Caco-2 (cell line): ENCODE measurements at regions of chr6 and their contacts with region 1.

Region 1: DNA sequence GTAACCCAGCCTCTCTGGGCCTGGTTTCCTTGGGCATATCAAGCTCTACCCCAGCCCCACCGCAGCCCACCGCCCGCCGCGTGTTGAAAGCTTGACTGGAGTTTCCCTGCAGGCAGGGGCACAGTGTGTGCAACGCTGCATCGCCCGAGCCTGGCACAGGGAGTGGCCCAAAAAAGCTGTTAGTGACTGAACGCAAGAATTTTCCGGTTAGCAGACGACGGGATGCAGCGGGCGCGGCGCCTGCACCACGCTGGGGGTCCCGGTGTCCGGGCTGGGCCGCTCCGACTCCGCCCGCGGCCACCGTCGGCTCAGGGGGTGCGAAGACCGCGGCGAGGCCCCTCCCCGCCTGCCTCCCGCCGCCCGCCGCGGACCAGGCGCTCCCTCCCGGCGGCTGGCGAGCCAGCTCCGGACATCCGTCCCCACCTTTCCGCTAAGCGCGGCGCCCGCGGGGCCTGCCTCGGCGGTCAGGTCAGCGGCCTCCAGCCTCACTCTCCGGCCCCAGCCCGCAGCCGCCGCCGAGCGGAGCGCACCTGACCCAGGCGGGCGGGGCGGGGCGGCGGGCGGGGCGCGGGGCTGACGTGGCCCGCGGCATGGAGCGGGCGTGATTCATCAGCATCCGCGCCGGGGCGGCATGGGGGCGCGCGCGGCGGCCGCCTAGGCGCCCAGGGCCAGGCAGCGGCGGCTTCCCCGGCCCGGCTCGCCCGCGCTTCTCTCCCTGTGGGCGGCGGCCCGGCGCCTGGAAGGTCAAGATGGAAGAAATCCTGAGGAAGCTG is at the start of gene ARFGEF3:
- DNase-seq: peak; percentile 61 to 80
- H3K4me3 ChIP-seq: peak within 1 kb of the TSS; percentile 68
- H3K4me3 Mint-ChIP-seq: peak within 1 kb of the TSS; percentile 71
- H3K27ac Mint-ChIP-seq: no peak within 1 kb of the TSS
- H3K4me1 ChIP-seq: 0 out of 2 replicates have a peak, but pooled peaks cover 5% of the 10 kb centered on the region
- H3K4me1 Mint-ChIP-seq: peaks cover 7% of the 10 kb centered on the region
- H3K27me3 ChIP-seq: 0 out of 2 replicates have a peak, but pooled peaks cover 1% of the 10 kb centered on the region
- H3K27me3 Mint-ChIP-seq: peaks cover 15% of the 10 kb centered on the region
- CTCF ChIP-seq: no peak
- total RNA-seq, gene ARFGEF3: 5.2 and 5.6 TPM in 2 replicates

Region 2: DNA sequence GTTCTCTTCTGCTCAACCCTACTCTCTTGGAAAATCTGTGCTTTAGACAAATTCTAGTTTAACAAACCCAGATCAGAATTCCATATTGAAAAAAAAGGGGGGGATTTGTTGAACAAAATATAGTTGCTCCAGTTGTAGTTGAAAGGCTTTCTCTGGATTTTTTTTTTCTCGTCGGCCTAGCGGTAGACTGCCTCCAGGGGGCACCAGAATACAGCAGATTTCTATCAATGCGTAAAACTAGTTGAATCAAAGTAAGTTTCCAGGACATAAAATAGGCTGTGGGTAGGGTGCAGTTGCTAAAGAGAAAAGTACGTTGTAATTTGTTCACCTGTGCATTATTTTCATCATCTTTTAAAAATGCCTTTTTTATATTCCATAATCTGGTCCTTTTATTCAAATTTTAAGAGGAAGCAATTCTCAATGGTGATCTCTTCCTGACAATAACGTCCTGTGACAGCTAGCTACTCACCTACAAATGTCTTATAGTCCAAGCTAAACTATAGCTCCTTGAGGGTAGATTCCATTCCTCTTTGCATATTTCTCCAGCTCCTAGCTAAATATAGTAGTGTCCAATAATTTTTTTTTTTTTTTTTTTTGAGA is 159.7 kb before region 1 on chr6:
- CTCF ChIA-PET with region 1: no interaction called
- POLR2A ChIA-PET with region 1: no interaction called
- intact Hi-C with region 1: no loop called
- DNase-seq: peak; percentile 53 to 69
- H3K4me3 ChIP-seq: no peak overlapping the region
- H3K4me3 Mint-ChIP-seq: no peak overlapping the region
- H3K27ac Mint-ChIP-seq: no peak overlapping the region
- H3K4me1 ChIP-seq: peaks cover 2% of the 10 kb centered on the region; the same call in 1 of the 2 replicates
- H3K4me1 Mint-ChIP-seq: peaks cover 9% of the 10 kb centered on the region
- H3K27me3 ChIP-seq: no peaks in the 10 kb centered on the region
- H3K27me3 Mint-ChIP-seq: no peaks in the 10 kb centered on the region
- CTCF ChIP-seq: peak; percentile 87

Region 3: DNA sequence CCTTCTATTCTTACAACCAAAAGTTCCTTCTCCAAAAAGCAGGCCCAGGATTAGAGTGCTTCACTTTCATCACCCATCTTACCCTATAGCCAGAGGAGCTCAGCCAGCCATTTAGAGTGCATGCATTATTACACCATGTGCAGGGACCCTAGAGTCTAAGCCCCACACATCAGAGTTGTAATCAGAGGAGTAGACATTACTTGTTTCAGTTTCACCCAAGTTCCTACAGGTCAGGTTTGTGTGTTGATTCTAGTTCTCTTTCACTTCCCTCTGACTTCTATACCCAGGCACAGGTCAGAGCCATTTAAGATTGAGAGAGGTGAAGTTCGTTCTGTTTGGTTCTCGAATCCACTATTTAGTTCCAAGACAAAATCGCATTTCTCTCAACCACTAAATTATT is 16.1 kb before region 1 on chr6:
- CTCF ChIA-PET with region 1: no interaction called
- POLR2A ChIA-PET with region 1: no interaction called
- intact Hi-C with region 1: no loop called
- DNase-seq: no peak
- H3K4me3 ChIP-seq: no peak overlapping the region
- H3K4me3 Mint-ChIP-seq: no peak overlapping the region
- H3K27ac Mint-ChIP-seq: no peak overlapping the region
- H3K4me1 ChIP-seq: no peaks in the 10 kb centered on the region
- H3K4me1 Mint-ChIP-seq: no peaks in the 10 kb centered on the region
- H3K27me3 ChIP-seq: no peaks in the 10 kb centered on the region; the same call in 1 of the 2 replicates
- H3K27me3 Mint-ChIP-seq: peaks cover 9% of the 10 kb centered on the region
- CTCF ChIP-seq: no peak

Region 4: GRCh38 chr6:138231381-138231897 is 69.9 kb after region 1 on chr6:
- CTCF ChIA-PET with region 1: no interaction called
- POLR2A ChIA-PET with region 1: no interaction called
- intact Hi-C with region 1: loop called (anchors 2 kb)
- DNase-seq: peak; percentile 45 to 51
- H3K4me3 ChIP-seq: no peak overlapping the region
- H3K4me3 Mint-ChIP-seq: peak overlapping the region; percentile 25
- H3K27ac Mint-ChIP-seq: peak overlapping the region; percentile 47
- H3K4me1 ChIP-seq: peaks cover 27% of the 10 kb centered on the region
- H3K4me1 Mint-ChIP-seq: peaks cover 34% of the 10 kb centered on the region
- H3K27me3 ChIP-seq: no peaks in the 10 kb centered on the region
- H3K27me3 Mint-ChIP-seq: no peaks in the 10 kb centered on the region
- CTCF ChIP-seq: no peak

Region 5: GRCh38 chr6:138278326-138278725 is 116.8 kb after region 1 on chr6:
- CTCF ChIA-PET with region 1: no interaction called
- POLR2A ChIA-PET with region 1: no interaction called
- intact Hi-C with region 1: loop called (anchors 2 kb)
- DNase-seq: peak; percentile 43 to 53
- H3K4me3 ChIP-seq: no peak overlapping the region
- H3K4me3 Mint-ChIP-seq: no peak overlapping the region
- H3K27ac Mint-ChIP-seq: no peak overlapping the region
- H3K4me1 ChIP-seq: no peaks in the 10 kb centered on the region
- H3K4me1 Mint-ChIP-seq: no peaks in the 10 kb centered on the region
- H3K27me3 ChIP-seq: no peaks in the 10 kb centered on the region
- H3K27me3 Mint-ChIP-seq: no peaks in the 10 kb centered on the region
- CTCF ChIP-seq: peak; percentile 28 to 75

Region 6: DNA sequence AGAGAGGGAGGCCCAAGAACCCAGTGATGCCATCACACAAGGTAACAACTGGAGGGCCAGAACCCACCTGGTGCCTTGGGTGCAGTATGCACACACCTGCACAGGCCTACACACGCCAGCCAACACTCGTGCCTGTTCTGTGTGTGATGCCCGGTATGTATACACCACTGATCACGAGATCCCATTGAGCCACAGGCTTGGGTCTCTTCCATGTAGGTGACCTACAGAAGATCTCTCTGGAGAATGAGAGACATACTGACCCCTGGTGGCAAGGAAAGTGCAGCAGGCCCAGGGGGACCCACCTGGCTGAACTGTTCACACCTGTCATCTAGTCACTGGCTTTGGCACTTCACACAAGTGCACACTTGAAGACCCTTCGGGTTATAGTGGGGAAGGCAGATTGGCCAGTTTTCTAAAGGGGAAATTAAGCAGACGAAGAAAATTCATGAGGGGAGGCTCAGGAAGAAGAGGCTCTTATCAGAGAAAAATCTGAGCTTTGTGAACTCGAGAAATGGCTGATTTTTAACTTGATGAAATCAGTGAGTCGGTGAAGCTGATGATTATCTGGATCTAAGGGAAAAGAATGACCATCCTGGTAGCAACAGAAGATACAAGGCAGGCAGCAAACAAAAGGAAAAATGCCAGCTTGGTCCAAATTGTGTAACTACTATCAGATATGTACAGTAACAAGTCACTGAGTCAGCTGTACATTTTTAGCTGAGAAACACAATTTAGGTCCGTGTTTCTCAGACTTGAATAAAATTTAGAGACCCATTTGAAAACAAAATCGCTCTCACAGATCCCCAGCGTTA is 125.8 kb after region 1 on chr6:
- CTCF ChIA-PET with region 1: no interaction called
- POLR2A ChIA-PET with region 1: no interaction called
- intact Hi-C with region 1: loop called (anchors 2 kb)
- DNase-seq: peak; percentile 69 to 77
- H3K4me3 ChIP-seq: no peak overlapping the region
- H3K4me3 Mint-ChIP-seq: no peak overlapping the region
- H3K27ac Mint-ChIP-seq: peak overlapping the region; percentile 13
- H3K4me1 ChIP-seq: no peaks in the 10 kb centered on the region
- H3K4me1 Mint-ChIP-seq: no peaks in the 10 kb centered on the region
- H3K27me3 ChIP-seq: no peaks in the 10 kb centered on the region
- H3K27me3 Mint-ChIP-seq: no peaks in the 10 kb centered on the region
- CTCF ChIP-seq: peak; percentile 69 to 81

Region 7: GRCh38 chr6:138349891-138350290 is 188.4 kb after region 1 on chr6:
- CTCF ChIA-PET with region 1: no interaction called
- POLR2A ChIA-PET with region 1: no interaction called
- intact Hi-C with region 1: no loop called
- DNase-seq: no peak
- H3K4me3 ChIP-seq: no peak overlapping the region
- H3K4me3 Mint-ChIP-seq: no peak overlapping the region
- H3K27ac Mint-ChIP-seq: no peak overlapping the region
- H3K4me1 ChIP-seq: no peaks in the 10 kb centered on the region
- H3K4me1 Mint-ChIP-seq: no peaks in the 10 kb centered on the region
- H3K27me3 ChIP-seq: no peaks in the 10 kb centered on the region
- H3K27me3 Mint-ChIP-seq: peaks cover 3% of the 10 kb centered on the region
- CTCF ChIP-seq: no peak

Region 8: GRCh38 chr6:138403801-138404661 is 242.5 kb after region 1 on chr6 and contains the start of gene HEBP2:
- CTCF ChIA-PET with region 1: no interaction called
- POLR2A ChIA-PET with region 1: no interaction called
- intact Hi-C with region 1: loop called (anchors 1 kb)
- DNase-seq: peak; percentile 99
- H3K4me3 ChIP-seq: peak within 1 kb of the TSS; percentile 81
- H3K4me3 Mint-ChIP-seq: peak within 1 kb of the TSS; percentile 81
- H3K27ac Mint-ChIP-seq: peak within 1 kb of the TSS; percentile 81
- H3K4me1 ChIP-seq: peaks cover 11% of the 10 kb centered on the region; the same call in 1 of the 2 replicates
- H3K4me1 Mint-ChIP-seq: no peaks in the 10 kb centered on the region
- H3K27me3 ChIP-seq: no peaks in the 10 kb centered on the region
- H3K27me3 Mint-ChIP-seq: no peaks in the 10 kb centered on the region
- CTCF ChIP-seq: peak; percentile 53 to 65
- total RNA-seq, gene HEBP2: 64.3 and 73.1 TPM in 2 replicates